ENCODE measurements at regions of chrX and their contacts with region 1.

Region 1: GRCh38 chrX:107602694-107603239 is 25.5 kb upstream of the PRPS1 start:
- DNase-seq: no peak
- H3K4me3 Mint-ChIP-seq: no peak overlapping the region
- H3K27ac Mint-ChIP-seq: no peak overlapping the region
- H3K4me1 Mint-ChIP-seq: no peaks in the 10 kb centered on the region
- H3K27me3 Mint-ChIP-seq: peaks cover 2% of the 10 kb centered on the region

Region 2: DNA sequence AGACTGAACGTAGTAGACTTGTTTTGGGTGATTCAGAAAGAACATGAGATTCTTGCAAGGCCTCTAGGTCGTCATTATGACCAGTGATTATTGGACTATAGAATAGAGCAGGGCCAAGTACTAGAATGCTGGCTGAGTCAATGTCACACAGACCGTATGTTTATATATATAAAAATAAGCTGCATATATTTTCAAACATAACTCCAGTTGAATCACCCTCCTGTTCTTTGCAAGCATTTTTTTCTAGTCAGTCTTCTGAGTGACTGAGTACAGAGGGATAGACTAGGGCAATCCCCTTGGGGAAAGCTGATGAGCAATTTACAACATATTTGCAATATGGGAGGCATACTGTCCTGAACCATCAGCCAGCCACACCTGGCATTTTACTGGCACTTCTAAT is 22.8 kb before region 1 on chrX:
- intact Hi-C with region 1: loop called (anchors 1 kb)
- DNase-seq: no peak
- H3K4me3 Mint-ChIP-seq: no peak overlapping the region
- H3K27ac Mint-ChIP-seq: no peak overlapping the region
- H3K4me1 Mint-ChIP-seq: no peaks in the 10 kb centered on the region
- H3K27me3 Mint-ChIP-seq: no peaks in the 10 kb centered on the region

Measured in activated T-helper 1 cell treated with anti-CD3 and anti-CD28 coated beads, Interleukin-12 subunit alpha, Interleukin-12 subunit beta, Interleukin-2, Interleukin-4 antibody, amounts not matched to agents 30 ng/mL and 10 ng/mL and 1 ng/mL, durations not matched to agents 14 hours and 24 hours and 36 hours (primary cell).